Activated CD4-positive, alpha-beta T cell treated with anti-CD3 and anti-CD28 coated beads for 36 hours (primary cell): ENCODE measurements at regions of chr19 and their contacts with region 1.

Region 1: DNA sequence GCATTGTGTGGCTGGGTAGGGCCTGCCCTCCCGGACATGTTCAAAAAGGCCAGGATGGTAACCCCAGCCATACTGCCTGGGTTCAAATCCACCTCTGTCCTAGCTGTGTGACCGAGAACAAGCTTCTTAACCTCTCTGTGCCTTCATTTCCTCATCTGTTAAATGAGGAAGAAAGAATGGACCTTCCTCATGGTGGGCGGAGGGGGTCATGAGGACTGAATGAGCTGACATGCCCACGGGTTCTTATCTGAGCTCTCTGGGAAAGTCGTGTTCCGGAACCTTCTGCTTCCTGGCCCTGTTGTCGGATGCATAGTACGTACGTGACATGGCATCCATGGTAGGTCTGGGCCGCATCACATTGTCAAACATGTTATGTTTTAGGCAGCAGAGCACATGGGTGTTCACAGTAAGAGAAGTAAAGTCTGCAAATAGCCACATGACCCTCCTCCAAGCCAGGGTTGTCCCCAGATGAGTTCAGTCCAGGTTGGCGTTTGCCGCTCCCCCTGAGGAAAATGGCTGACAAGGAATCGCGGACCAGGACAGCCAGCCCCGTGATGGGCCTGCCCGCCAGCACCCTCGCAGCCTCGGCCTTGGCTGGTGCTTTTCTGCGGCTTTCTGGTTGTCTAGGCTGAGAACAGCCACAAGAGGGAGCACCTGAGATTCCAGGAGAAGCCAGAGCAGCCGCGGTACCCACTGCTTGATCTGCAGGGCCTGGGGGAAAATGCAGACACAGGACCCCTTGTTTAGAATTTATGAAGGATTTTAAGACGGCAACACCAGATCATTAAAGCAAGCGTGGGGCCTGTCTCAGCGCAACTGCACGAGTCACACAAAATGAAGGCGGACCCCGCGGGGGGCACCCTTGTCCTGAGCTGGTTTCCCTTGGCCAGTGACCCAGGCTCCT is 2.4 kb upstream of the NTN5 start:
- DNase-seq: peak; percentile 86
- ATAC-seq: peak; percentile 97
- H3K4me3 Mint-ChIP-seq: no peak overlapping the region
- H3K27ac Mint-ChIP-seq: no peak overlapping the region
- H3K4me1 Mint-ChIP-seq: peaks cover 7% of the 10 kb centered on the region
- H3K27me3 Mint-ChIP-seq: no peaks in the 10 kb centered on the region

Region 2: DNA sequence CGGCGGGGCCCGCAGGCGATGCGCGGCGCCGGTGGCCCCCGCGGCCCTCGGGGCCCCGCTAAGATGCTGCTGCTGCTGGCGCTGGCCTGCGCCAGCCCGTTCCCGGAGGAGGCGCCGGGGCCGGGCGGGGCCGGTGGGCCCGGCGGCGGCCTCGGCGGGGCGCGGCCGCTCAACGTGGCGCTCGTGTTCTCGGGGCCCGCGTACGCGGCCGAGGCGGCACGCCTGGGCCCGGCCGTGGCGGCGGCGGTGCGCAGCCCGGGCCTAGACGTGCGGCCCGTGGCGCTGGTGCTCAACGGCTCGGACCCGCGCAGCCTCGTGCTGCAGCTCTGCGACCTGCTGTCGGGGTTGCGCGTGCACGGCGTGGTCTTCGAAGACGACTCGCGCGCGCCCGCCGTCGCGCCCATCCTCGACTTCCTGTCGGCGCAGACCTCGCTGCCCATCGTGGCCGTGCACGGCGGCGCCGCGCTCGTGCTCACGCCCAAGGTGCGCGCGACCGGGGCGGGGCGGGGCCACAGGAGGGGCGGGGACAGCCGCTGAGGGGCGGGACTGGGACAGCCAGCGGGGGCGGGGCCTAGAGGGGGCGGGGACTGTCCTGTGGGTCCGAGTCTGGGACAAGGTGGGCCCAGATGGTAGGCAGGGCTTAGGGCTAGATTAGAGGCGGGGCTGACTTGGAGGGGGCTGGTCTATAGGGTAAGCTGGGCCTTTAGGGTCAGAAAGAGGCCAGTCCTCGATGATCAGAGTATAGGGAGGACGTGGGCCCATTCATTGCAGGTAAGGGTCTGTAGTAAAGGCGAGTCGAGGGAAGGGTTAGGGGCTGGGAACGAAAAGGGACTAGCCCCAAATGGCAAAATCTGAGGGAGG is 276.6 kb before region 1 on chr19:
- CTCF ChIA-PET with region 1: no interaction called
- POLR2A ChIA-PET with region 1: no interaction called
- intact Hi-C with region 1: no loop called
- DNase-seq: peak; percentile 94
- ATAC-seq: peak; percentile 68
- H3K4me3 Mint-ChIP-seq: peak overlapping the region; percentile 83
- H3K27ac Mint-ChIP-seq: no peak overlapping the region
- H3K4me1 Mint-ChIP-seq: peaks cover 29% of the 10 kb centered on the region
- H3K27me3 Mint-ChIP-seq: peaks cover 31% of the 10 kb centered on the region

Region 3: GRCh38 chr19:48510421-48511280 is 164.5 kb before region 1 on chr19:
- CTCF ChIA-PET with region 1: no interaction called
- POLR2A ChIA-PET with region 1: no interaction called
- intact Hi-C with region 1: no loop called
- DNase-seq: peak; percentile 88
- ATAC-seq: peak; percentile 43
- H3K4me3 Mint-ChIP-seq: peak overlapping the region; percentile 70
- H3K27ac Mint-ChIP-seq: no peak overlapping the region
- H3K4me1 Mint-ChIP-seq: peaks cover 8% of the 10 kb centered on the region
- H3K27me3 Mint-ChIP-seq: no peaks in the 10 kb centered on the region

Region 4: DNA sequence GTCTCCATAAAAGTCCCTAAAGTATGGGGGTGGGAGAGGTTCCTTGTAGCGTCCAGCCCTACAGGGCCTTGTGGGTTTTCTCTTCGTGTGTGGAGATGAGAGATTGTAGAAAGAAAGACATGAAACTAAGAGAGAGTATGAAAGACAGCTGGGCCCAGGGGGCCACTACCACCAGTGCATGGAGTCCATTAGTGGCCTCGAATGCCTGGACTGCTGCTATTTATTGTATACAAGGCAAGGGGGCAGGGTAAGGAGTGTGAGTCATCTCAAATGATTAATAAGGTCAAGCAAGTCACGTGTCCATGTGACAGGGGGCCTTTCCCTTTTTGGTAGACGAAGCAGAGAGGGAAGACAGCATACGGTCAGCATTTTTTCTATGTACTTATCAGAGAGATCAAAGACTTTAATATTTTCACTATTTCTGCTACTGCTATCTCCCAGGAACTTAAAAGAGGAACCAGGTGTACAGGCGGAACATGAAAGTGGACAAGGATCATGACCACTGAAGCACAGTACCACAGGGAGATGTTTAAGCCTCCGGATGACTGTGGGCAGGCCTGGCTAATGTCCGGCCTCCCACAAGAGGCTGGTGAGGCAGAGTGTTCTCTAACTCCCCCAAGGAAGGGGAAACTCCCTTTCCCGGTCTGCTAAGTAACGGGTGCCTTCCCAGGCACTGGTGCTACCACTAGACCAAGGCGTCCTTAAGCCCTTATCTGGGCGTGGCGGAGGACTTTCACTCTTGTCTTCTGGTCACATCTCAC is 105.6 kb after region 1 on chr19:
- CTCF ChIA-PET with region 1: no interaction called
- POLR2A ChIA-PET with region 1: no interaction called
- intact Hi-C with region 1: loop called in 1 of 2 experiments (anchors 5 kb)
- DNase-seq: no peak
- ATAC-seq: no peak
- H3K4me3 Mint-ChIP-seq: no peak overlapping the region
- H3K27ac Mint-ChIP-seq: no peak overlapping the region
- H3K4me1 Mint-ChIP-seq: peaks cover 2% of the 10 kb centered on the region
- H3K27me3 Mint-ChIP-seq: peaks cover 9% of the 10 kb centered on the region